CD14-positive monocyte (primary cell): ENCODE measurements at regions of chr4 and their contacts with region 1.

Region 1: GRCh38 chr4:156959298-156959702 is 12.3 kb downstream of the PDGFC start:
- DNase-seq: no peak
- H3K4me3 ChIP-seq: no peak overlapping the region
- H3K4me3 Mint-ChIP-seq: no peak overlapping the region
- H3K27ac ChIP-seq: no peak overlapping the region
- H3K27ac Mint-ChIP-seq: no peak overlapping the region
- H3K4me1 ChIP-seq: peaks cover 33% of the 10 kb centered on the region in 2 donors
- H3K4me1 Mint-ChIP-seq: peaks cover 47% of the 10 kb centered on the region
- H3K27me3 ChIP-seq: no peaks in the 10 kb centered on the region
- H3K27me3 Mint-ChIP-seq: no peaks in the 10 kb centered on the region
- CTCF ChIP-seq: no peak

Region 2: GRCh38 chr4:156329779-156330178 is 629.5 kb before region 1 on chr4:
- intact Hi-C with region 1: loop called in 1 of 2 experiments (anchors 5 kb)
- DNase-seq: peak; percentile 70 to 90 (median 85)
- H3K4me3 ChIP-seq: peak overlapping the region in 1 of 3 experiments; percentile 20
- H3K4me3 Mint-ChIP-seq: no peak overlapping the region
- H3K27ac ChIP-seq: peak overlapping the region in 1 of 2 donors; percentile 82
- H3K27ac Mint-ChIP-seq: peak overlapping the region; percentile 41 to 81 (median 69)
- H3K4me1 ChIP-seq: peaks cover 13 to 30% of the 10 kb centered on the region in 2 donors
- H3K4me1 Mint-ChIP-seq: peaks cover 23% of the 10 kb centered on the region
- H3K27me3 ChIP-seq: no peaks in the 10 kb centered on the region
- H3K27me3 Mint-ChIP-seq: no peaks in the 10 kb centered on the region
- CTCF ChIP-seq: no peak

Region 3: DNA sequence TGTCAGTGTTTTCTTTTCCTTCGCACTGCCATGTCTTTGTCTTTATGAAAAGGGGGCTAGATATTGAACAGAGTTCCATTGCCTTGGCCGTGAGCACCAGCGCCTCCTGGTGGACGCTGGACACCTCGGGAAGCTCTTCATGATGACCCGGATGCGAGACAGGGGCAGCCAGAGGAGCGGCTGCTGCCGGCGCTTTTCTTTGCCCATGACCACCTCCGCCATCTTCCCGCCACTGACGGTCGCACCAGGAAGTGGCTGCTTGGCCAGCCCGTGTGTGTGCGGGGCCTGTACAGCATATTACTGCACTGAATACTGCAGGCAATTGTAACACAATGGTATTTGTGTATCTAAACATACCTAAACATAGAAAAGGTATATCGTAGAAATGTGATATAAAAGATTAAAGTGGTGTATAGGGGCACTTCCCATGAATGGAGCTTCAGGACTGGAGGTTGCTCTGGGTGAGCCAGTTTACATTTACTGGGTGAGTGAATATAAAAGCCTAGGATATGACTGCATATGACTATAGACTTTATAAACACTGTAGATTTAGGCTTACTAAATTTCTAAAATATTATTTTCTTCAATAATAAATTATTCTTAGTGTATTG is 245.4 kb after region 1 on chr4:
- intact Hi-C with region 1: no loop called
- DNase-seq: peak; percentile 5 to 26 (median 16)
- H3K4me3 ChIP-seq: no peak overlapping the region
- H3K4me3 Mint-ChIP-seq: no peak overlapping the region
- H3K27ac ChIP-seq: no peak overlapping the region
- H3K27ac Mint-ChIP-seq: no peak overlapping the region
- H3K4me1 ChIP-seq: no peaks in the 10 kb centered on the region
- H3K4me1 Mint-ChIP-seq: no peaks in the 10 kb centered on the region
- H3K27me3 ChIP-seq: no peaks in the 10 kb centered on the region
- H3K27me3 Mint-ChIP-seq: peaks cover 0 to 2% (median 1%) of the 10 kb centered on the region in 3 donors
- CTCF ChIP-seq: peak; percentile 82